ENCODE measurements at regions of chr6 and their contacts with region 1.

Region 1: GRCh38 chr6:34145161-34146020 is 496 bp downstream of the GRM4 start:
- DNase-seq: peak; percentile 36
- H3K4me3 ChIP-seq: peak overlapping the region; percentile 33
- H3K27ac ChIP-seq: no peak overlapping the region
- H3K27me3 ChIP-seq: peaks cover 56% of the 10 kb centered on the region
- CTCF ChIP-seq: no peak

Region 2: GRCh38 chr6:33771146-33772081 is 374.0 kb before region 1 on chr6:
- in situ Hi-C with region 1: loop called (anchors 25 kb)
- DNase-seq: peak; percentile 94
- H3K4me3 ChIP-seq: no peak overlapping the region
- H3K27ac ChIP-seq: peak overlapping the region; percentile 79
- H3K27me3 ChIP-seq: no peaks in the 10 kb centered on the region
- CTCF ChIP-seq: peak; percentile 69